Right cardiac atrium (tissue), 5 donors: ENCODE measurements at regions of chr16 and their contacts with region 1.

Region 1: GRCh38 chr16:75486676-75487313 is 8.4 kb downstream of the CHST6 start:
- DNase-seq: no peak
- ATAC-seq: no peak
- H3K4me3 ChIP-seq: no peak overlapping the region
- H3K27ac ChIP-seq: no peak overlapping the region
- H3K4me1 ChIP-seq: no peaks in the 10 kb centered on the region
- H3K27me3 ChIP-seq: no peaks in the 10 kb centered on the region

Region 2: DNA sequence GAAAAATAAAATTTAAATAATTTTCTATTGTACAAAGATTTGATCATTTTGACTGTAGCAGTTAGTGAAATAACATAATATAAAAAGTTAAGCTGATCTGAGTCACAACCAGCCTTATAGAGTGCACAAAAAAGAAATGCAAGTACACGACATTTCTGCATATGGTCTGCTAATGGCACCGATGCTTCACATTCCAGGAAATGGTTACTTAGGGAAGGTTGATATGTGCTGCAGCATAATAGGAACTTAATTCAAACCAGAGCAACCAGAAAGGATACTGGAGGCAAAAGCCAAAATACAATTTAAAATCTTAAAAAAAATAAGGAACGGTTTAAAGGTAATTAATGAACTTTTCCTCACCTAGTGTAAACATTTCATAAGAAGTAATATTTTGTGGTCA is 43.5 kb before region 1 on chr16:
- intact Hi-C with region 1: no loop called
- DNase-seq: no peak
- ATAC-seq: no peak
- H3K4me3 ChIP-seq: no peak overlapping the region
- H3K27ac ChIP-seq: no peak overlapping the region
- H3K4me1 ChIP-seq: no peaks in the 10 kb centered on the region
- H3K27me3 ChIP-seq: no peaks in the 10 kb centered on the region

Region 3: DNA sequence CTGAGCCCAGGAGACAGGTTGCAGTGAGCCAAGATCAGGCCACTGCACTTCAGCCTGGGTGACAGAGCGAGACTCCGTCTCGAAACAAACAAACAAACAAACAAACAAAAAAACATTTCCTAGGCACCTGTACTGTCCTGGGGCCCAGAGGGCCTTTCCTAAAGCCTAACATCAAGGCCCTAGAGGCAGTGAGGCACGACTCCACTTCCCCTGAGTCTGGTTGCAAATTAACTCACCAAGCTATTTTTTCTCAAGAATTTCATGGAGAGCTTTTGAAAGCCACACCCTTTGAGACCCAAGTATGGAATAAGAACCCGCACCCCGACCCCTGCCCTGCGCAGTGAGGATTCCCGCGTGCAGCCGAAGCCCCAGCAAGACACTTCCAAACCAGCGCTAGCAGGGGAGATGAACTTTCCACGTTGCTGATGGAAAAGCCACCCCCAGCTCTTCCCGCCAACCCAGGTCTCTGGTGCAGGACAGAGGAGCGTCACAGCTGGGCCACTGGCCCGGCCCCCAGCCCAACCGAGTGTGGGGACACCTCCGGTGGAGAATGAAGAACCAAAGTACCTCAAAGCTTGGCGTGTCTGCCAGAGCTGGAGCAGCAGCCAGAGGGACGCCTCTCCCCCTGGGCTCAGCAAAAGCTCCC is 47.9 kb after region 1 on chr16:
- intact Hi-C with region 1: loop called in 1 of 4 experiments (anchors 10 kb)
- DNase-seq: no peak
- ATAC-seq: no peak
- H3K4me3 ChIP-seq: no peak overlapping the region
- H3K27ac ChIP-seq: no peak overlapping the region
- H3K4me1 ChIP-seq: no peaks in the 10 kb centered on the region
- H3K27me3 ChIP-seq: no peaks in the 10 kb centered on the region

Region 4: GRCh38 chr16:75593825-75594820 is 107.3 kb after region 1 on chr16:
- intact Hi-C with region 1: loop called in 1 of 4 experiments (anchors 10 kb)
- DNase-seq: no peak
- ATAC-seq: peak in 1 of 2 donors; percentile 35
- H3K4me3 ChIP-seq: no peak overlapping the region
- H3K27ac ChIP-seq: no peak overlapping the region
- H3K4me1 ChIP-seq: no peaks in the 10 kb centered on the region
- H3K27me3 ChIP-seq: no peaks in the 10 kb centered on the region